ENCODE measurements at regions of chr1 and their contacts with region 1.

Region 1: DNA sequence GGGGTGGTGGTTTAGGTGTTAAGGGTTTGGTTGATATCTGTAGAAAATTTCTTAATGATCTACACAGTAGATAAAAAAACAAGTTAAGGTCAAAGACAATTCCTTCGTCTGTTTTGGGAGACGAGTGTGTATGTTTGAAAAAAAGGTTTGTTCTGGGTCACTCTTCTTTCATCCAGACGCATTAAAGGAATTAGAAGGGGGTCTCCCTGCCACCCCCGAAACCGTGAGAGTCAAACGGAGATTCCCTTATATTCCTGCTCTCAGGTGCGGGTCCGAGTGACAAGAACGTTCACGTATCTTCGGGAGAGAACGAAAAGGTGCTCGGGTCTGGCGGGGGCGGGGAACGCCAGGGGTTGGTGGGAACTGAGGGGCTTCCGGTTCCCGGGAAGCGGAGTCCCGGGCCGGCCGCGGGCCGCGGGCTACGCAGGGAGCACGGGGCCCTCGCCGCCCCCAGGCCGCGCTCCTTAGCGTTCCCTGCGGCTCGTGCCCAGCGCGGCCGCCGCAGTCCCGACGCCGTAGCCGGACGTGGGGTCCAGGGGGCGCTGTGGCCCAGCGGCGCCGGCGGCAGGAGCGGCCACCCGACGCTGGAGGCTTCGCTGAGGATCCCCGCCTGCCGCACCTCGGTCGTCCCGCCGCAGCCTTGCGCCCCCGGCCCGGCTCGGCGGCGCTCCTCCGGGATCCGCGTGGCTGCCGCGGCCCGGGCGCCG is at the start of gene ZFYVE9:
- DNase-seq: peak; percentile 80
- H3K4me3 ChIP-seq: peak within 1 kb of the TSS; percentile 81 to 100 (median 86)
- H3K27ac ChIP-seq: peak within 1 kb of the TSS; percentile 94 to 98 (median 96)
- H3K4me1 ChIP-seq: peaks cover 4 to 43% (median 19%) of the 10 kb centered on the region in 4 donors
- H3K27me3 ChIP-seq: no peaks in the 10 kb centered on the region
- CTCF ChIP-seq: peak in 4 of 5 experiments; percentile 52 to 69 (median 62)
- EP300 ChIP-seq: no peak
- POLR2A ChIP-seq: no peak
- total RNA-seq, gene ZFYVE9: 22.8 to 37.0 (median 28.2) TPM

Region 2: GRCh38 chr1:52288286-52288685 is 146.6 kb after region 1 on chr1:
- in situ Hi-C with region 1: loop called in 3 of 4 experiments (anchors 5 to 25 kb)
- intact Hi-C with region 1: no loop called
- DNase-seq: no peak
- H3K4me3 ChIP-seq: no peak overlapping the region
- H3K27ac ChIP-seq: no peak overlapping the region
- H3K4me1 ChIP-seq: no peaks in the 10 kb centered on the region
- H3K27me3 ChIP-seq: no peaks in the 10 kb centered on the region
- CTCF ChIP-seq: no peak
- EP300 ChIP-seq: no peak
- POLR2A ChIP-seq: no peak

Region 3: GRCh38 chr1:52296345-52296744 is 154.7 kb after region 1 on chr1:
- in situ Hi-C with region 1: loop called in 2 of 4 experiments (anchors 5 to 25 kb)
- intact Hi-C with region 1: no loop called
- DNase-seq: no peak
- H3K4me3 ChIP-seq: no peak overlapping the region
- H3K27ac ChIP-seq: no peak overlapping the region
- H3K4me1 ChIP-seq: peaks cover 0 to 6% (median 2%) of the 10 kb centered on the region in 4 donors
- H3K27me3 ChIP-seq: no peaks in the 10 kb centered on the region
- CTCF ChIP-seq: peak; percentile 60 to 75 (median 65)
- EP300 ChIP-seq: no peak
- POLR2A ChIP-seq: no peak

Region 4: DNA sequence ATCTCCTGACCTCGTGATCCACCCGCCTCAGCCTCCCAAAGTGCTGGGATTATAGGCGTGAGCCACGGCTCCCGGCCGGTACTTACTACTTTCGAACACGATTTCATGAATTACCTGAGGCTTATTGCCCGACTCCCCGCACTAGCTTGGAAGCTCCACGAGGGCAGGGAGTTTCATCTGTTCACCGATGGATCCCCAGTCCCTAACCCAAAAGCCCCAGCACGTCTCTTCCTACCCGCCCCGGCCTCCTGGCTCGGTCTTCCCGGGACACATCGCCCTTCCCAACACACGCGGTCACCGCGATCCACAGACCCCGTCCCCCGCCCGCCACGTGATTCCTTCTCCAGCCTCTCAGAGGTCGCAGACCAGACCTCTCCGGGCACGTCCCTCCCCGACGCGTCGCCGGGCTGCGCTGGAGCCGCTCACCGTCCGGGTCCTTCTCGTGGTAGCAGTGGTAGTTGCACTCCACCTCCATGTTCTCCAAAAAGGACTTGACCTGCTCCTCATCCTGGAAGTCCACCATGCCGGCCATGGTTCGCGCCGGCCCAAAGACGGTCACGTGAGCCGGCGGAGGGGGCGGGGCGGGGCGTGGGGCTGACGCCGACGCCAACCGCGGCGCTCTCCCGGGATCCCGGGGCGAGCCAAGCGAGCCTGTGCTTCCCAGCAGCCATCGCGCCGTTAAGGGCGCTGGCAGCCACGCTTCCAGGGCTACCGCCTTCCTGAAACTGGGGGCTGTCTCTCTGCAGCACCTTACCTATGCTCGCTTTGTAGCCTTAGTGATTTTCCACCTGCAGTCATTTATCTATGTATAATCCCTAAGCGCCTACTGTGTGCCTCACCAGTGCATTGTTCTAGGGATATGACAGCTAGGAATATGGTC is 556.4 kb after region 1 on chr1 and contains the start of gene COA7:
- in situ Hi-C with region 1: loop called (anchors 25 kb)
- intact Hi-C with region 1: no loop called
- DNase-seq: peak; percentile 90
- H3K4me3 ChIP-seq: peak within 1 kb of the TSS; percentile 54 to 67 (median 62)
- H3K27ac ChIP-seq: peak within 1 kb of the TSS; percentile 87 to 92 (median 90)
- H3K4me1 ChIP-seq: peaks cover 0 to 32% (median 18%) of the 10 kb centered on the region in 4 donors
- H3K27me3 ChIP-seq: no peaks in the 10 kb centered on the region
- CTCF ChIP-seq: no peak
- EP300 ChIP-seq: no peak
- POLR2A ChIP-seq: no peak
- total RNA-seq, gene COA7: 2.2 to 12.7 (median 9.1) TPM